ENCODE measurements at regions of chr2 and their contacts with region 1.

Region 1: DNA sequence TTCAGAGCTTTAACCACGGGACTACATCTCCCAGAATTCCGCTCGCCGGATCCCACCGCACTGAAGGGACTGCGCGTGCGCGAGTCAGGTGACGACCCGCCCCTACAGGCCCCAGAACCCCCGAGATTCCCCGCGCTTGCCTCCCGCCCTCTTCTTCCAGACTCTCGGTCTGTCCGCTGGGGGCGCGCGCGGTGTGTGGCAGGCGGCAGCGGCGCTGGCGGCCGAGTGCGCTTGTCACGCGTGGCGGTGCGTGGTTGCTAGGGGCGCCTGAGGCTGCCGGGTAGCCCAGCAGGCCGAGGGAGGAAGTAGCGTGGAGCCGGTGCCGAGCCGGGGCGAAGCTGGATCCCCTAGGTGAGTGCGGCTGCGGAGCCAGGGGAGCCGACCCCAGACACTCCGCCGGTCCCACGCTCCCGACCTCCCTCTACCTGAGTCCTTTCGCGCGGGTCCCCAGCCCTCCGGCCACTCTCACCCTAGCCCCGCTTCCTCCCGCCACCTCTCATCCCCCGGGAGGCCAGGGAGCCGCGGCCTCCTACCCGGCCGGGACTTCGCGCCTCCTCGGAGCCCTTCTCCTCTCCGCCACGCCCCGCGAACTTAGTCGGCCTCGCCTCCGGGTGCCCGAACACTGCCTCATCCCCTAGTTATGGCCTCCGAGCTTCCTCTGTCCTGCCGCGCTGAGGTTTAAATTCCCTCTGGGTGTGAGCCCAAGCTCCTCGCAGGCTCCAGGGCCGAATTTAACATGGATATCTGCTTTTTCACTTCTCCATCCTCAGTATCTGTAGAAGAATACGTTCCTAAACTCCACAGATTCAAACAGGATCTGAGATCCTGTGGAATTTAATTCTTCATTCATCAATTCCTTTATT is at the start of gene TTLL4:
- DNase-seq: peak; percentile 99
- H3K4me3 Mint-ChIP-seq: peak within 1 kb of the TSS; percentile 94
- H3K27ac Mint-ChIP-seq: peak within 1 kb of the TSS; percentile 87
- H3K4me1 Mint-ChIP-seq: peaks cover 27% of the 10 kb centered on the region
- H3K27me3 Mint-ChIP-seq: peaks cover 12% of the 10 kb centered on the region
- total RNA-seq, gene TTLL4: 70.6 and 78.3 TPM in 2 replicates

Region 2: DNA sequence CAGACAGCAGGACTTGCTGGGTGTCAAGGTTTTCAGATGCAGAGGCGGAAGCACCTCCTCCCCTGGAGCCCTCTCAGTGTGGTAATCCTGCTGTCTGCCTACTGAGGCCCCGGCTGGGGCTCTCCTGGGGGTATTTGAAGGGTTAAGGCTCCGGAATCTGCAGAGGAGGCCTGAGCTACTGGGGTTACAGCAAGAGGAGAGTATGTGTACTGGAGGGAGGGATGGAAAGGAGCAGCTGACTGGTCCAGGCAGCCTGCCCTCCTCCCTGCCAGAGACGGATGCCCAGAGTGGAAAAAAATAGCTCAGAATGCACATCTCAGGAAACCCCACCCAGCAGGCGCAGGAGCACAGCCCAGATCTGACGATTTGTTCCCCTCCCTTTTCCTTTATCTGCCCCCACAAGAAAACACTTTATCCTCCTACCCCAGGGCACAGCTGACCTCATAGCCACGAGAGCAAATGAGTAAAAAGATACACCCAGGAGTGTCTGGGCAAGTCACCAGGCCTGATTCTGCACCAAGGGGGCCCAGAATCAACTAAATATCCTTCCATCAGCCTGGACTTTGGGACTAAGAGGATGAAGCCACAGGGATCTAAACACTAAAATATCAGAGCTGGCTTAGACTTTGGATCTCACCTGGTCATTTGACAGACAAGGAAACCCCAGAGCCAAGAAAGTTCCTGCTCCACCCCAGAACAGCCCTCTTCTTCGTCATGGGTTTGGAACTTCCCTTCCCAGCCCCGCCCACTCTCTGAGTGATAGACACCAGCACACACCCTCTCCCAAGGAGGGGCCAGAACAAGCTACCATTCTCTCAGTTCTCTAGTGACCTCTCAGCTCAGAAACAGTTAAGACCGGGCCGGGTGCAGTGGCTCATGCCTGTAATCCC is 424.1 kb before region 1 on chr2:
- intact Hi-C with region 1: loop called (anchors 5 kb)
- DNase-seq: peak; percentile 82
- H3K4me3 Mint-ChIP-seq: peak overlapping the region; percentile 94
- H3K27ac Mint-ChIP-seq: peak overlapping the region; percentile 99
- H3K4me1 Mint-ChIP-seq: peaks cover 72% of the 10 kb centered on the region
- H3K27me3 Mint-ChIP-seq: no peaks in the 10 kb centered on the region

Region 3: GRCh38 chr2:218671654-218672566 is 39.0 kb before region 1 on chr2 and contains the starts of genes RNF25 and STK36:
- intact Hi-C with region 1: loop called (anchors 1 kb)
- DNase-seq: peak; percentile 77
- H3K4me3 Mint-ChIP-seq: peak within 1 kb of the TSS; percentile 100
- H3K27ac Mint-ChIP-seq: peak within 1 kb of the TSS; percentile 93
- H3K4me1 Mint-ChIP-seq: peaks cover 22% of the 10 kb centered on the region
- H3K27me3 Mint-ChIP-seq: no peaks in the 10 kb centered on the region
- total RNA-seq, gene RNF25: 29.1 and 31.6 TPM in 2 replicates
- total RNA-seq, gene STK36: 15.9 TPM in 2 replicates

Region 4: GRCh38 chr2:218744615-218745014 is 33.7 kb after region 1 on chr2:
- intact Hi-C with region 1: loop called (anchors 1 kb)
- DNase-seq: no peak
- H3K4me3 Mint-ChIP-seq: peak overlapping the region; percentile 21
- H3K27ac Mint-ChIP-seq: peak overlapping the region; percentile 80
- H3K4me1 Mint-ChIP-seq: peaks cover 30% of the 10 kb centered on the region
- H3K27me3 Mint-ChIP-seq: no peaks in the 10 kb centered on the region

Region 5: GRCh38 chr2:218908721-218909619 is 198.1 kb after region 1 on chr2:
- intact Hi-C with region 1: loop called (anchors 1 kb)
- DNase-seq: peak; percentile 78
- H3K4me3 Mint-ChIP-seq: peak overlapping the region; percentile 79
- H3K27ac Mint-ChIP-seq: peak overlapping the region; percentile 78
- H3K4me1 Mint-ChIP-seq: peaks cover 18% of the 10 kb centered on the region
- H3K27me3 Mint-ChIP-seq: peaks cover 28% of the 10 kb centered on the region

Region 6: DNA sequence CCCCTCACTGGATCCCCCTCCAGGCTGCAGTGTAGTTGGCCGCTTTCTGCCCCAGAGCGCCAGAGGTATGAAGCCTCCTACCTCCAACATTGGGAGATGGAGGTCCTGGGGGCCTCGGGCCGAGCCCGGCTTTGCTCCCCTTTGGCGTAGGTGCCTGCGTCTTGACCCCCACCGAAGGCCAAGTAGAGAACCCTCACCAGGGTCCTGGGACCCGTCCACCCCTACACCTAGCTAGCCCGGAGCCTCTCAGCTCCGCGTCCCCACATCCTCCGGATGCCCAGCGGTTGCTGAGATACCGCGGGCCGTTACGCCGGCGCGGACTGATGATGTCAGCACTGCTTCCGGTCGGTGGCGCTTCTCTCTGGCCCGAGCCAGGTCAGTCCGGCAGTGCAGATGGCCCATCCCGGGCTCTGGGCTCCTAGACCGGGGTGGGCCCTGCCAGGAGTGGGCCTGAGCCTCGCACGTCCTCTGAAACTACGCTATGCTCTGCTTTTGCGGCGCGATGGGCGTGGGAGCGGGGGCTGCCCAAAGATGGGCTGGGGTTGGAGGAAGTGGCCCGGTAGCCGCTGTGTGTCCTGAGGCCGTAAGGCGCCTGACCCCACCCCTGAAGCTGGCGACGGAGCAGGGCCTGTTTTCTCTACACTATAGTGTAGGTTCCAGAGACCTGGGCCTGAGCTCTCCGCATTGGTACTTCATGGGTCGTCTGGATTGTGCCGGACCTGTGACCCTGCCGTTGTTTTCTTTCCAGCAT is 534.4 kb after region 1 on chr2 and contains the starts of genes GLB1L and STK16:
- intact Hi-C with region 1: loop called (anchors 10 kb)
- DNase-seq: peak; percentile 89
- H3K4me3 Mint-ChIP-seq: peak within 1 kb of the TSS; percentile 99
- H3K27ac Mint-ChIP-seq: peak within 1 kb of the TSS; percentile 99
- H3K4me1 Mint-ChIP-seq: peaks cover 57% of the 10 kb centered on the region
- H3K27me3 Mint-ChIP-seq: no peaks in the 10 kb centered on the region
- total RNA-seq, gene GLB1L: 4.6 and 4.9 TPM in 2 replicates
- total RNA-seq, gene STK16: 30.1 and 30.6 TPM in 2 replicates

Measured in activated T-helper 1 cell treated with anti-CD3 and anti-CD28 coated beads, Interleukin-12 subunit alpha, Interleukin-12 subunit beta, Interleukin-2, Interleukin-4 antibody, amounts not matched to agents 30 ng/mL and 10 ng/mL and 1 ng/mL, durations not matched to agents 14 hours and 24 hours and 36 hours (primary cell).